H1 (cell line): ENCODE measurements at regions of chr10 and their contacts with region 1.

Region 1: GRCh38 chr10:101749047-101750016 is 26.6 kb downstream of the FGF8 start:
- DNase-seq: peak in 1 of 2 experiments; percentile 27
- H3K4me3 ChIP-seq: no peak overlapping the region
- H3K27ac ChIP-seq: no peak overlapping the region
- H3K4me1 ChIP-seq: peaks cover 0 to 6% (median 2%) of the 10 kb centered on the region in 4 experiments; a peak in 3 of 7 replicates
- H3K27me3 ChIP-seq: peaks cover 0 to 2% (median 0%) of the 10 kb centered on the region in 4 experiments; a peak in 1 of 7 replicates
- CTCF ChIP-seq: peak; percentile 40 to 70 (median 62)
- EP300 ChIP-seq: no peak
- POLR2A ChIP-seq: no peak
- RAD21 ChIP-seq: peak; percentile 49 to 69

Region 2: GRCh38 chr10:101759309-101760247 is 10.2 kb after region 1 on chr10:
- CTCF ChIA-PET with region 1: interaction called, 44 read pairs
- POLR2A ChIA-PET with region 1: interaction called, 4 read pairs
- DNase-seq: peak in 1 of 2 experiments; percentile 63
- H3K4me3 ChIP-seq: no peak overlapping the region
- H3K27ac ChIP-seq: no peak overlapping the region
- H3K4me1 ChIP-seq: peaks cover 0 to 9% (median 7%) of the 10 kb centered on the region in 4 experiments; a peak in 6 of 7 replicates
- H3K27me3 ChIP-seq: peaks cover 0 to 5% (median 4%) of the 10 kb centered on the region in 4 experiments; a peak in 3 of 7 replicates
- CTCF ChIP-seq: no peak
- EP300 ChIP-seq: no peak
- POLR2A ChIP-seq: no peak
- RAD21 ChIP-seq: no peak

Region 3: DNA sequence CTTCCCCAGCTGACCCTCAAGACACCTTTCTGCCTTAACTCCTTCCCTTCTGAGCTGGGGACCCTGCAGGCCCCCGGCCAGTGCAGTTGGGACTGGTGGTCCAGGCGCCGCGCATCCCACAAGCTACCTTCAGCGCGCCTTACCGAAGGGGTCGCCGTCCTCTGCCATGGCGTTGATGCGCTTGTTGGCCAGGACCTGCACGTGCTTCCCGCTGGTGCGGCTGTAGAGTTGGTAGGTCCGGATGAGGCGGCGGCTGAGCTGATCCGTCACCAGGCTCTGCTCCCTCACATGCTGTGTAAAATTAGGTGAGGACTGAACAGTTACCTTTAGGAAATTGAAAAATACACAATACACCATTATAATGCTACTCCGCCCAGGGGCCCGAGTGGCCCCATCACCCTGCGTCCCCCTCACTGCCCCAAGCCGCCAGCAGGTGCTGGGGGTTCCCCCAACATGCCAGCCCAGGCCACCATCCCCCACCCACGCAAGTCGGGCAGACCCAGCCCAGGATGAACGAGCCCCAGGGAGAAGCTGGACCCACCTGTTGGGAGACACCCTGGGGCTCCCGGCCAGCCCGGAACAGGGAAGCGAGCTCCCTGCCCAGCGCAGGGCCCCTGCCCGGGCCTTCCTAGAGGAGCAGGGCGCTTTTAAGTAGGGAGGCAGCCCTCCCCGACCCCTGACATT is 25.4 kb after region 1 on chr10:
- CTCF ChIA-PET with region 1: interaction called, 30 read pairs
- POLR2A ChIA-PET with region 1: interaction called, 4 read pairs
- DNase-seq: peak in 1 of 2 experiments; percentile 79
- H3K4me3 ChIP-seq: peak overlapping the region in 3 of 4 experiments; percentile 27 to 54 (median 35); a peak in 6 of 8 replicates
- H3K27ac ChIP-seq: no peak overlapping the region
- H3K4me1 ChIP-seq: peaks cover 16 to 42% (median 28%) of the 10 kb centered on the region in 4 experiments
- H3K27me3 ChIP-seq: peaks cover 50 to 74% (median 69%) of the 10 kb centered on the region in 4 experiments
- CTCF ChIP-seq: no peak
- EP300 ChIP-seq: no peak
- POLR2A ChIP-seq: no peak
- RAD21 ChIP-seq: no peak

Region 4: DNA sequence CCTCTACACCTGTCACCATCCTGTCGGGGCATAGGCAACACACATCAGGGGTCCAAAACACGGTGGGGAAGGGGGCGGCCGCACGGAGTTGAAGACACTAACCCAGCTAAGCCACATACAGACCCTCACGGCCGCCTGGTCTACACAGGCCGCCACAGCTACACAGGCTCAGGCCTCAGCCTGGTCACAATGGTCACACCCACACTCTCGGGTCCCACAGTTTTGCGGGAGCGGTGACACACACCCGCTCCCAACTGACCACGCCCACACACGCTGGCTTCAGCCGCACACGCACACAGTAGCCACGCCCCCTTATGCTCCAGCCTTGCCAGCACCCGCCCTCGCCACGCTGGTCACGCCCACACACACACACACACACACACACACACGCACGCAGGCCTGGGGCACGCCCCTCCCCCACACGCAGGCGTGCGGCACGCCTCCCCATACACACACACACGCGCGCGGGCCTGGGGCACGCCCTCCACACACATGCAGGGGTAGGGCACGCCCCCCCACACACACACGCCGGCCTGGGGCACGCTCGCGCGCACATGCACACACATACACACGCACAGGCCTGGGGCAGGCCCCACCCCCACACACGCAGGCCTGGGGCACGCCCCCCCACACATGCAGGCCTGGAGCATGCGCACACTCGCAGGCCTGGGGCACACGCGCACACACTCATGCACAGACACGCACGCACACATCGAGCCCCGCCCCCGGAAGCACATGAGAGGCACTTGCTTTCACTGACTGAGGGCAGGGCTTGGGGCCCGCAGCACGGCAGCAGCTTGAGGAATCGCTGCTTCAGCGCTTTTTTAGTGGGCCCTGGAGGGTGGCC is 81.2 kb after region 1 on chr10:
- CTCF ChIA-PET with region 1: no interaction called
- POLR2A ChIA-PET with region 1: no interaction called
- DNase-seq: peak in 1 of 2 experiments; percentile 90
- H3K4me3 ChIP-seq: peak overlapping the region; percentile 44 to 66 (median 48)
- H3K27ac ChIP-seq: no peak overlapping the region
- H3K4me1 ChIP-seq: peaks cover 9 to 22% (median 17%) of the 10 kb centered on the region in 4 experiments
- H3K27me3 ChIP-seq: no peaks in the 10 kb centered on the region
- CTCF ChIP-seq: no peak
- EP300 ChIP-seq: no peak
- POLR2A ChIP-seq: no peak
- RAD21 ChIP-seq: no peak